ENCODE measurements at regions of chr16 and their contacts with region 1.

Region 1: GRCh38 chr16:53743149-53743566 is 39.2 kb downstream of the FTO start:
- DNase-seq: peak; percentile 66
- H3K4me3 Mint-ChIP-seq: no peak overlapping the region
- H3K27ac Mint-ChIP-seq: peak overlapping the region; percentile 33
- H3K4me1 Mint-ChIP-seq: peaks cover 36% of the 10 kb centered on the region
- H3K27me3 Mint-ChIP-seq: no peaks in the 10 kb centered on the region
- CTCF ChIP-seq: peak; percentile 55

Region 2: DNA sequence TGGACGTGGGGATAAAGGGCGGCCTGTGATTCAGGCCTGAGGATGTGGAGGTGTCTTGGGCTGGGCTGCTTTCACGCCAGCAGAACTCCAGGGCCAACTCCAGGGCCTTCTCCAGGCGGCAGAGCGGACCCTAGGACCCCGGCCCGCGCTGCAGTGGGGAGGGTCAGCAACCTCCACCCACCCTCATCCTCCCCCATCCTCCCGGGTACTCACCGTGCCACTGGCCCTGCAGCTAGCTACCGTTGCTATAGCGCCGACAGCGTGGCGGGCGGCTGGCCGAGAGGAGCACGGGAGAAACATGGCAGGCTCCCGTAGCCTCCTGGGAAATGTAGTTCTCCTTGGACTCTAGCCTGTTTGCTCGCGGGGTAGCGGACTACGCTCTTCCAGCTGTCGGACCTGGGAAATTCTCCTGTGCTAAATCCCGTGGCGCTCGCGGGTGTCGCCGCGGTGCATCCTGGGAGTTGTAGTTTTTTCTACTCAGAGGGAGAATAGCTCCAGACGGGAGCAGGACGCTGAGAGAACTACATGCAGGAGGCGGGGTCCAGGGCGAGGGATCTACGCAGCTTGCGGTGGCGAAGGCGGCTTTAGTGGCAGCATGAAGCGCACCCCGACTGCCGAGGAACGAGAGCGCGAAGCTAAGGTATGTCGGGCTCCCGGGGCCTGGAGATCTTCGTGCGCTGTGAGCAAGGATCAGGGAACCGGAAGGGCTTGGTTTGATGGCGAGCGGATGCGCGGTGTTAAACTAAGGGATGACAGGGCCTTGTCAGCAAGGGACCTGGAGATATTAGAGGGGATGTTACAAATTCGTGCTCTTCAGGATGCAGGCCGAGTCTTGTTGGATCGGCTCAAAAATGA is 39.3 kb before region 1 on chr16 and contains the starts of genes FTO and RPGRIP1L:
- CTCF ChIA-PET with region 1: interaction called, 4 read pairs
- POLR2A ChIA-PET with region 1: interaction called, 19 read pairs
- intact Hi-C with region 1: no loop called
- DNase-seq: peak; percentile 99
- H3K4me3 Mint-ChIP-seq: peak within 1 kb of the TSS; percentile 100
- H3K27ac Mint-ChIP-seq: peak within 1 kb of the TSS; percentile 96
- H3K4me1 Mint-ChIP-seq: peaks cover 9% of the 10 kb centered on the region
- H3K27me3 Mint-ChIP-seq: no peaks in the 10 kb centered on the region
- CTCF ChIP-seq: no peak
- total RNA-seq, gene FTO: 55.0 and 67.7 TPM in 2 replicates
- total RNA-seq, gene RPGRIP1L: 13.4 and 17.3 TPM in 2 replicates

Region 3: DNA sequence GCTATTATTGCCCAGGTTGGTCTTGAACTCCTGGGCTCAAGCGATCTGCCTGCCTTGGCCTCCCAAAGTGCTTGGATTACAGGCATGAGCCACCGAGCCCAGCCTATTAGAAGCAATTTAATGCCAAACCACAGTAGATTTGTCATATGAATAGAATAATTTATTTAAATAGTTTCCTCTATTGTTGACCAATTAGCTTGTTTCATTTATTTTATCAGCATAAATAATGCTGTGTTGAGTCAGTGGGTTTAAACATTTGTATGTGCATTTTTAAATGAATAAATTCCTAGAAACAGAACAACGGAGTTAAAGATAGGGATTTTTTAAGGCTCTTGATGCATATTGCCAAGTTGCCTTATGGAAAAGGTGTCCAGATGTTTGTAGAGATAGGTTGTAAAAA is 12.5 kb before region 1 on chr16:
- CTCF ChIA-PET with region 1: interaction called, 14 read pairs
- POLR2A ChIA-PET with region 1: interaction called, 5 read pairs
- intact Hi-C with region 1: no loop called
- DNase-seq: no peak
- H3K4me3 Mint-ChIP-seq: no peak overlapping the region
- H3K27ac Mint-ChIP-seq: no peak overlapping the region
- H3K4me1 Mint-ChIP-seq: peaks cover 26% of the 10 kb centered on the region
- H3K27me3 Mint-ChIP-seq: no peaks in the 10 kb centered on the region
- CTCF ChIP-seq: no peak

Region 4: DNA sequence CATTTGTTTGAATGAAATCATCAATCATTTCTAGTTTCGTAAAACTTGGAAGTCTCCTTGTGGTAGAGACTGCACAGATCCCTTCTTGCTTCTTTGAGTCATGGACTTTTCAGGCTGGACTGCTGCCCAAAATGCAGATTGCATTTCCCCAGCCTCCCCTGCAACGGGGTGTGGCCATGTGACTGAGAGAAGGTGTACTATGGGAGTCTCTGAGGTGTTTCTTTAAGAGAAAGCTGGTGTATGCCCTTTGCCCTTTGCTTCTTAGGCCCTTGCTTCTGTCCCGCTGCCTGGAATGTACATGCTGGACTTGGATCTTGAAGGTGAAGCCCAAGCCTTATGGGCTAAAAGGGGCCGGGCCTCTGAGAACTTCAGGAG is 12.4 kb after region 1 on chr16:
- CTCF ChIA-PET with region 1: interaction called, 27 read pairs
- POLR2A ChIA-PET with region 1: interaction called, 64 read pairs
- intact Hi-C with region 1: no loop called
- DNase-seq: peak; percentile 96
- H3K4me3 Mint-ChIP-seq: peak overlapping the region; percentile 16
- H3K27ac Mint-ChIP-seq: peak overlapping the region; percentile 64
- H3K4me1 Mint-ChIP-seq: peaks cover 26% of the 10 kb centered on the region
- H3K27me3 Mint-ChIP-seq: no peaks in the 10 kb centered on the region
- CTCF ChIP-seq: no peak

Region 5: DNA sequence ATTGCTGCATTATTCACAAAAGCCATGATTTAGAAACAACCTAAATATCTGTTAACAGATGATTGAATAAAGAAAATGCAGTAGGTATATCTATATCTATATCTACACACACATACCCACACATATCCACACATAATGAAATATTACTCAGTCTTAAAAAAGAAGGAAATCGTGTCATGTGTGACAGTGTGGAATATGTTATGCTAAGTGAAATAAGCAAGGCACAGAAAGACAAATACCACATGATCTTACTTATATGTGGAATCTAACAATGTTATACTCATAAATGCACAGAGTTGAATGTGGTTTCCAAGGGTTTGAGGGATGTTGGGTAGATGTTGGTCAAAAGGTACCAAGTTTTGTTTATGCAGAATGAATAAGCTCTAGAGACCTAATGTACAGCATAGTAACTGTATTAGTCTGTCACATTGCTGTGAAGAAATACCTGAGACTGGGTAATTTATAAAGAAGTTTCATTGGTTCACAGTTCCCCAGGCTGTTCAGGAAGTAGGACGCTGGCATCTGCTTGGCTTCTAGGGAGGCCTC is 116.9 kb after region 1 on chr16:
- CTCF ChIA-PET with region 1: no interaction called
- POLR2A ChIA-PET with region 1: no interaction called
- intact Hi-C with region 1: no loop called
- DNase-seq: no peak
- H3K4me3 Mint-ChIP-seq: no peak overlapping the region
- H3K27ac Mint-ChIP-seq: no peak overlapping the region
- H3K4me1 Mint-ChIP-seq: peaks cover 5% of the 10 kb centered on the region
- H3K27me3 Mint-ChIP-seq: no peaks in the 10 kb centered on the region
- CTCF ChIP-seq: no peak

Measured in MCF 10A (cell line).